PC-3 (cell line): ENCODE measurements at regions of chr7 and their contacts with region 1.

Region 1: DNA sequence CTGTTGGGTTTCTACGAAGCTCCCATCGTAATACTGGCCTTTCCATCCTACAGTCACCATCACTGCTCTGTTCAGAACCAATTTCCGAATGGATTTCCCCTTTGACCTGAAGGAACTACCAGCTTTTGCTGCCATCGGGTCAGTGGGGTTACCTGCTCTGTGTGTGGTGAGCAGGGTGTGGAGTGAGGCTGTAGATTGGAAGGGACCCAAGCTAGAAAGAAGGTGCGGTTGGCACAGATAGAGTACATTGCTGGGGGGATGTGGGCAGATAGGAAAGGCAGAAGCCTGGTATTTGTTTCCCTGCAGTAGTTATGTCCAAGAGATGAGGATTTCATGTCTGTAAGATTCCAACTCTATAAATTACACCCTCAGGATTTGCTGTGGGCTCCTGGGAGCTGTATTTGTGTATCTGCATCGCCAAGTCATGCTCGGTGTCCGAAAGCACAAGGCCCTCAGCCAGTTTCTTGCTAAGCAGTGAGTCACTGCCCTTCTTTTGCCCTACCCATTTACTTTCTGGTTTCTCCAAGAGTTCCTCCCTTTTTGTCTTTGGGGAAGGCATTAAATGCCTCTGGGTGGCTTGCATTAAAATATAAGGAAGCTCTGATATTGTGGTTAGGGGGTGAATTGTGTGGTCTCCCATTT is 15.4 kb downstream of the CLCN1 start:
- DNase-seq: peak; percentile 94
- ATAC-seq: peak; percentile 78
- H3K4me3 ChIP-seq: peak overlapping the region; percentile 24; the same call in 1 of the 2 replicates
- H3K27ac ChIP-seq: peak overlapping the region; percentile 96
- H3K4me1 ChIP-seq: peaks cover 51% of the 10 kb centered on the region
- H3K27me3 ChIP-seq: no peaks in the 10 kb centered on the region
- CTCF ChIP-seq: no peak

Region 2: DNA sequence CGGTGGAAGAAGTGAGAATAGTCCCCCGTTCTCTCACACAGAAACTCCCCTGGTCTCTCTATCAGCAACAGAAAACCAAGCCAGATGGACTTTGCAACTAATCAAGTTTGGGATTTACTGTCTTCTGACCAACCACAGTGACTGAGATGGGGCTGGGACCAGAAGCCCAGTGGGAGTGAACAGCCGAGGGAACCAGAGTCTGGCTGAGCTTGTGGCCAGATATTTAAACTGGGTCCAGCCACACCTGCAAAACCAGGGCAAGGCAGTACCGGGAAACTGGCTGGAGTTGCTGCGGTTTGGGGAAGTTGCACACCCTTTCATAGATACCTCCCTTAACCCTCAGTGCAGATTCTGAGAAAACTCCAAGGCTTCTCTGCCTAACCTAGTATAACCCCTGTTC is 62.0 kb before region 1 on chr7:
- CTCF ChIA-PET with region 1: no interaction called
- POLR2A ChIA-PET with region 1: interaction called, 15 read pairs
- intact Hi-C with region 1: no loop called
- DNase-seq: no peak
- ATAC-seq: no peak
- H3K4me3 ChIP-seq: no peak overlapping the region
- H3K27ac ChIP-seq: no peak overlapping the region
- H3K4me1 ChIP-seq: peaks cover 7% of the 10 kb centered on the region
- H3K27me3 ChIP-seq: no peaks in the 10 kb centered on the region
- CTCF ChIP-seq: no peak

Region 3: GRCh38 chr7:143299840-143300239 is 31.5 kb before region 1 on chr7:
- CTCF ChIA-PET with region 1: no interaction called
- POLR2A ChIA-PET with region 1: interaction called, 11 read pairs
- intact Hi-C with region 1: no loop called
- DNase-seq: peak; percentile 52
- ATAC-seq: peak; percentile 5; the same call in 1 of the 2 replicates
- H3K4me3 ChIP-seq: no peak overlapping the region
- H3K27ac ChIP-seq: peak overlapping the region; percentile 77
- H3K4me1 ChIP-seq: peaks cover 60% of the 10 kb centered on the region
- H3K27me3 ChIP-seq: no peaks in the 10 kb centered on the region
- CTCF ChIP-seq: peak; percentile 83

Region 4: GRCh38 chr7:143372070-143372469 is 40.8 kb after region 1 on chr7:
- CTCF ChIA-PET with region 1: no interaction called
- POLR2A ChIA-PET with region 1: interaction called, 8 read pairs
- intact Hi-C with region 1: loop called (anchors 1 kb)
- DNase-seq: peak; percentile 81
- ATAC-seq: peak; percentile 19
- H3K4me3 ChIP-seq: no peak overlapping the region
- H3K27ac ChIP-seq: peak overlapping the region; percentile 42
- H3K4me1 ChIP-seq: peaks cover 50% of the 10 kb centered on the region
- H3K27me3 ChIP-seq: no peaks in the 10 kb centered on the region
- CTCF ChIP-seq: peak; percentile 52

Region 5: GRCh38 chr7:143380255-143380645 is 49.0 kb after region 1 on chr7:
- CTCF ChIA-PET with region 1: interaction called, 4 read pairs
- POLR2A ChIA-PET with region 1: interaction called, 14 read pairs
- intact Hi-C with region 1: loop called (anchors 1 kb)
- DNase-seq: peak; percentile 79
- ATAC-seq: peak; percentile 34
- H3K4me3 ChIP-seq: peak overlapping the region; percentile 96
- H3K27ac ChIP-seq: peak overlapping the region; percentile 95
- H3K4me1 ChIP-seq: peaks cover 55% of the 10 kb centered on the region
- H3K27me3 ChIP-seq: no peaks in the 10 kb centered on the region
- CTCF ChIP-seq: peak; percentile 87

Region 6: GRCh38 chr7:143490717-143491306 is 159.5 kb after region 1 on chr7:
- CTCF ChIA-PET with region 1: no interaction called
- POLR2A ChIA-PET with region 1: no interaction called
- intact Hi-C with region 1: no loop called
- DNase-seq: peak; percentile 39
- ATAC-seq: peak; percentile 82
- H3K4me3 ChIP-seq: no peak overlapping the region
- H3K27ac ChIP-seq: no peak overlapping the region
- H3K4me1 ChIP-seq: no peaks in the 10 kb centered on the region
- H3K27me3 ChIP-seq: no peaks in the 10 kb centered on the region
- CTCF ChIP-seq: peak; percentile 73